Heart left ventricle (tissue), 16 donors: ENCODE measurements at regions of chr20 and their contacts with region 1.

Region 1: GRCh38 chr20:8853805-8854338 is 215.0 kb upstream of the PLCB4 start:
- DNase-seq: peak in 2 of 5 donors; percentile 20 to 29
- ATAC-seq: peak; percentile 56 to 86 (median 82)
- H3K4me3 ChIP-seq: peak overlapping the region in 9 of 12 donors; percentile 6 to 39 (median 21)
- H3K27ac ChIP-seq: peak overlapping the region; percentile 34 to 81 (median 70)
- H3K4me1 ChIP-seq: peaks cover 0 to 25% (median 15%) of the 10 kb centered on the region in 12 donors
- H3K27me3 ChIP-seq: no peaks in the 10 kb centered on the region
- CTCF ChIP-seq: peak; percentile 78 to 93 (median 89)
- POLR2A ChIP-seq: no peak

Region 2: DNA sequence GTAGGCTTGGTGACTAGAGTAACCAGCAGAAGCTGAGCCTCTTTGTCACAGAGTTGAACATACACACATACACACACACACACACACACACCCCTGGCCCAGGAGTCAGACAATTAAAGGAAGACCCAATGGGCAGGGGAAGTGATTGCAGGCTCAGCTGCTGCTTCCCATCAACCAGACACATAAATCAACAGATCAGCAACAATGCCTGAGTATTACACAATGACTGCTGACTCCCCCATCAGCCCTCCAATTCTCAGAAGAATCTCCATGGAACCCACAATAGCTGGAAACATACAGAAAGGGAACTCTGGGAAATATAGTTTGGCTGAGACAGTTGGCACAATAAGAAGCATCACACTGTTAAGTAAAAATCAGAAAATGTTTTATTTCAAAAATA is 55.4 kb before region 1 on chr20:
- intact Hi-C with region 1: loop called in 5 of 10 experiments (anchors 5 to 10 kb)
- DNase-seq: peak in 3 of 5 donors; percentile 19 to 34 (median 24)
- ATAC-seq: peak in 3 of 4 donors; percentile 53 to 63 (median 61)
- H3K4me3 ChIP-seq: no peak overlapping the region
- H3K27ac ChIP-seq: no peak overlapping the region
- H3K4me1 ChIP-seq: peaks cover 0 to 31% (median 8%) of the 10 kb centered on the region in 12 donors
- H3K27me3 ChIP-seq: no peaks in the 10 kb centered on the region
- CTCF ChIP-seq: no peak
- POLR2A ChIP-seq: no peak

Region 3: DNA sequence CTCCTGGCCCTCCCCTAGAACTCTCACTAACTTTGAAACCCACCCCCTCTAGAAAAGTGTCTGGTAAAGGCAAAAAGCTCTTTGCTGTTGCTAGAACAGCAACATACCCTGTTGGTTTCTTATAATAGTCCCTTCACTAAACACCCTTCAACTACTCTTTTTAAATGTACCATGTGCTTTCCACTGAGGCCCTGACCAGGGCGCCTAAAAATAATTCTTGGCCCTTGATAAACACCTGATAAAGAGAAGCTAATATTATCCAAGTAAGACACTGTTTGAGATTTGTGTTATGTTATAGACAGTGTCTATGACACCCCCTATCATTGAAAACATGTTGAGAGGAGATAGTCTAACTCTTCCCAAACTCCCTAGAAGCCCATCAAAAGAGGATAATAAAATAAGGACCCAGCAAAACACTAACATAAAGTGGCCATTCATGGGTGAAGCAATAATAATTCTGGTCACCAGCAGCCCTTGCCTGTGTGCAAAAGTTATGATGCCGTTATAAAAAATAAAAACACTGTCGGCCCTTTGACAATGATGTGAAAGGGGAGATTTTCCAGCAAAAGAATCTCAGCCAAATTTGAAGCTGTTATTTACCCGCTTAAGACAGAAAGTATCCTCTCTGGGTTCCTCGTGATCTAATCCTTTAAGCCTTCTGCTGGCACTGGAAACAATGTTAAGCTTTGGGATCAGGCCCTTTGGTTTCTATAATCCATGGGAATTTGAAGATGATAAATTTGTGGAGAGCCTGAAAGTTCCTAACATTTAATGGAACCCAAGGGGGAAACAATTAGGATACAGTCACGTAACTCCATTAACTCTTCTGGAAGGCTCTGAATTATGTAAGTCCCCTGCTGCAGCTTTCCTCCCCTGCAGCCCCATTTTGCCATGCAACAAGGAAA is 92.4 kb after region 1 on chr20:
- intact Hi-C with region 1: loop called in 3 of 10 experiments (anchors 5 to 10 kb)
- DNase-seq: no peak
- ATAC-seq: peak; percentile 59 to 86 (median 74)
- H3K4me3 ChIP-seq: no peak overlapping the region
- H3K27ac ChIP-seq: peak overlapping the region in 10 of 12 donors; percentile 21 to 59 (median 44)
- H3K4me1 ChIP-seq: peaks cover 0 to 35% (median 22%) of the 10 kb centered on the region in 12 donors
- H3K27me3 ChIP-seq: no peaks in the 10 kb centered on the region
- CTCF ChIP-seq: no peak
- POLR2A ChIP-seq: no peak

Region 4: GRCh38 chr20:8996817-8997512 is 143.1 kb after region 1 on chr20:
- intact Hi-C with region 1: loop called in 1 of 10 experiments (anchors 10 kb)
- DNase-seq: no peak
- ATAC-seq: no peak
- H3K4me3 ChIP-seq: no peak overlapping the region
- H3K27ac ChIP-seq: no peak overlapping the region
- H3K4me1 ChIP-seq: peaks cover 0 to 15% (median 8%) of the 10 kb centered on the region in 12 donors
- H3K27me3 ChIP-seq: no peaks in the 10 kb centered on the region
- CTCF ChIP-seq: no peak
- POLR2A ChIP-seq: no peak

Region 5: GRCh38 chr20:9172851-9173250 is 319.0 kb after region 1 on chr20:
- intact Hi-C with region 1: loop called in 8 of 10 experiments (anchors 5 to 10 kb)
- DNase-seq: no peak
- ATAC-seq: peak in 3 of 4 donors; percentile 55 to 65 (median 64)
- H3K4me3 ChIP-seq: no peak overlapping the region
- H3K27ac ChIP-seq: peak overlapping the region in 1 of 12 donors; percentile 13
- H3K4me1 ChIP-seq: peaks cover 0 to 34% (median 20%) of the 10 kb centered on the region in 12 donors
- H3K27me3 ChIP-seq: no peaks in the 10 kb centered on the region
- CTCF ChIP-seq: peak in 11 of 12 donors; percentile 20 to 66 (median 44)
- POLR2A ChIP-seq: no peak

Region 6: DNA sequence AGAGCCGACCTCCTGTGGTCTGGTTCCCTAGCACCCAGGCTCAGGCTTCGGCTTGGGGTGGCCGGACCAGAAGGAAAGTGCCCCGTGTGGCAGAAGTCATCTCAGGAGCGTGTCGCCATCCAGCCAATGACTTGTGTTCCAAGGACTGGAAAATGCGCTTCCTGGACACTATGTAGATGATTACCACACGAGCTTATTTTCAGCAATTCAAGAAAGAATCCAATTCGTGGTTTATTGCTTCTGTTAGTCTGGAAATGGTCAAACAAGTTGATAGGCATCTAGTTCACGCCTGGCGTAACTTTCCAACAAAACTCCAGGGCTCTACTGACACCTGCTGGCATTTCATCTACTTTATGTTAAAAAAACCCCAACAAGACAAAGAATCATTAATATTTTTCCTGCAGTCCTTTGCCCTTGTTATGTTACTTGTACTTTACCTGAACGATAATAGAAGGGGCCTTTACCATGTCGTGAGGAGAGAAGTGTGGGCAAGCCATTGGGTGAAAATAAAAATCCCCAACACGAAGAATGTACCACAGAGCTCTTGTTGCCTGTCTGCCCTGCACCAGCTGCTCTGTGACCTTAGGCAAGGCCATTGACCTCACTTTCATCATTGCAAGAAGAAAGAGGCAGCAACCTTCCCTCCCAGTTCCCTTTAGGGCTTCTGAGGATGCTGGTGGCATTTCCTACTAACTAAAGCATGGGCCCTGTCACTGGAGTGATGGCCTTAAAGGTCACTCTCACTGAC is 505.9 kb after region 1 on chr20:
- intact Hi-C with region 1: loop called in 8 of 10 experiments (anchors 1 to 5 kb)
- DNase-seq: peak in 4 of 5 donors; percentile 29 to 48 (median 42)
- ATAC-seq: peak; percentile 49 to 78 (median 68)
- H3K4me3 ChIP-seq: peak overlapping the region in 1 of 12 donors; percentile 11
- H3K27ac ChIP-seq: peak overlapping the region in 5 of 12 donors; percentile 4 to 46 (median 24)
- H3K4me1 ChIP-seq: peaks cover 0 to 20% (median 11%) of the 10 kb centered on the region in 12 donors
- H3K27me3 ChIP-seq: no peaks in the 10 kb centered on the region
- CTCF ChIP-seq: peak; percentile 27 to 74 (median 60)
- POLR2A ChIP-seq: no peak

Region 7: GRCh38 chr20:9392892-9393857 is 539.3 kb after region 1 on chr20:
- intact Hi-C with region 1: loop called in 1 of 10 experiments (anchors 10 kb)
- DNase-seq: peak; percentile 63 to 77 (median 71)
- ATAC-seq: peak; percentile 86 to 94 (median 91)
- H3K4me3 ChIP-seq: no peak overlapping the region
- H3K27ac ChIP-seq: no peak overlapping the region
- H3K4me1 ChIP-seq: peaks cover 0 to 16% (median 4%) of the 10 kb centered on the region in 12 donors
- H3K27me3 ChIP-seq: no peaks in the 10 kb centered on the region
- CTCF ChIP-seq: peak; percentile 56 to 84 (median 73)
- POLR2A ChIP-seq: no peak